ENCODE measurements at regions of chr15 and their contacts with region 1.

Region 1: GRCh38 chr15:62066663-62067447 is at the start of gene C2CD4A:
- DNase-seq: peak; percentile 82
- ATAC-seq: peak; percentile 73
- H3K4me3 Mint-ChIP-seq: peak within 1 kb of the TSS; percentile 77
- H3K27ac Mint-ChIP-seq: peak within 1 kb of the TSS; percentile 52
- H3K4me1 Mint-ChIP-seq: peaks cover 32% of the 10 kb centered on the region
- H3K27me3 Mint-ChIP-seq: peaks cover 19% of the 10 kb centered on the region
- total RNA-seq, gene C2CD4A: 0.61 to 0.73 TPM

Region 2: GRCh38 chr15:61871926-61872522 is 194.8 kb before region 1 on chr15:
- CTCF ChIA-PET with region 1: no interaction called
- POLR2A ChIA-PET with region 1: no interaction called
- intact Hi-C with region 1: loop called (anchors 2 kb)
- DNase-seq: no peak
- ATAC-seq: no peak
- H3K4me3 Mint-ChIP-seq: no peak overlapping the region
- H3K27ac Mint-ChIP-seq: no peak overlapping the region
- H3K4me1 Mint-ChIP-seq: no peaks in the 10 kb centered on the region
- H3K27me3 Mint-ChIP-seq: no peaks in the 10 kb centered on the region

Region 3: DNA sequence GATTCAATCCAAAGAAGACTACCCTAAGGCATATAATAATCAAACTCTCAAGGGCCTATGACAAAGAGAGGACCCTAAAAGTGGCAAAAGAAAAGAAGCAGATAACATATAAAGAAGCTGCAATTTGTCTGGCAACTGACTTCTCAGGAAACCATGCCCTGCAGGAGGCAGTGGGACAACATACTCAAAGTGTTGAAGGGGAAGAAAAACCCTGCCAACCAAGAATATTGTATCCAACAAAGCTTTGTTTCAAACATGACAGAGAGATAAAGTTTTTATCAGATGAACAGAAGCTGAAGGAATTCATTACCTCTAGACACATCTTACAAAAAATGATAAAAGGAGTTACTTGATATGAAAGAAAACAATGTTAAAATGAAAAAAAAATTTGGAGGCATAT is 173.7 kb before region 1 on chr15:
- CTCF ChIA-PET with region 1: no interaction called
- POLR2A ChIA-PET with region 1: no interaction called
- intact Hi-C with region 1: no loop called
- DNase-seq: no peak
- ATAC-seq: no peak
- H3K4me3 Mint-ChIP-seq: no peak overlapping the region
- H3K27ac Mint-ChIP-seq: no peak overlapping the region
- H3K4me1 Mint-ChIP-seq: no peaks in the 10 kb centered on the region
- H3K27me3 Mint-ChIP-seq: no peaks in the 10 kb centered on the region

Region 4: DNA sequence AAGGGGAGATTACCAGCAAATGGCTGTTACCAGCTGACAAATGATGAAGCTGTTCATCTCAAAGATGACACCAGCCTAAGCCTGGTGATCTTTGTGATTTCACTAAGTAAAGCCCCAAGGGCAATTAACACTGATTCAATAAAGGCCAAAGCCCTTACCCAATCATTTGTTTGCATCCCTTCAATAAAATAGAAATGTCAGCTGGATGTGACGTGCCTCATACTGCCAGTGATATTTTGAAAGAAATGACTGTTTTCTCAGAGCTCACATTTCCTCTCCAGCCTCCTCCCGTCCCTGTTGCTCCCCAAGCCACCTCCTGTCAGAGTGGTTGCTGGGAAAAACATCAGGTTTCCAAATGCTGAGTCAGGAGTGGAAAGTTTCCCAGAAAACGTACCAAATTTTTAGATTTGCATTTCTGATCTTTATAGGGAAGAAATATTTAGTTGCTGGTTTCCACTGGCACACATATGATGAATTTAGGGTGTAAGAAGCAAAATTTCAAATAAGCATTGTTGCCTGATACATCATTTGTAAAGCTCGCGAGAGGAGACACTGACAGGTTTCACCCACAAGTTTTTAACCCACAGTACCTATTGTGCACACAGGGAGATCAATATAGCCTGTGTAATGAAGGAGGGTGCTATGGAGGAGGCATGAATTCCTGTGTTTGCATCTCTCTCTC is 21.0 kb after region 1 on chr15:
- CTCF ChIA-PET with region 1: interaction called, 10 read pairs
- POLR2A ChIA-PET with region 1: no interaction called
- intact Hi-C with region 1: no loop called
- DNase-seq: no peak
- ATAC-seq: peak; percentile 47
- H3K4me3 Mint-ChIP-seq: no peak overlapping the region
- H3K27ac Mint-ChIP-seq: no peak overlapping the region
- H3K4me1 Mint-ChIP-seq: no peaks in the 10 kb centered on the region
- H3K27me3 Mint-ChIP-seq: peaks cover 2% of the 10 kb centered on the region

Region 5: DNA sequence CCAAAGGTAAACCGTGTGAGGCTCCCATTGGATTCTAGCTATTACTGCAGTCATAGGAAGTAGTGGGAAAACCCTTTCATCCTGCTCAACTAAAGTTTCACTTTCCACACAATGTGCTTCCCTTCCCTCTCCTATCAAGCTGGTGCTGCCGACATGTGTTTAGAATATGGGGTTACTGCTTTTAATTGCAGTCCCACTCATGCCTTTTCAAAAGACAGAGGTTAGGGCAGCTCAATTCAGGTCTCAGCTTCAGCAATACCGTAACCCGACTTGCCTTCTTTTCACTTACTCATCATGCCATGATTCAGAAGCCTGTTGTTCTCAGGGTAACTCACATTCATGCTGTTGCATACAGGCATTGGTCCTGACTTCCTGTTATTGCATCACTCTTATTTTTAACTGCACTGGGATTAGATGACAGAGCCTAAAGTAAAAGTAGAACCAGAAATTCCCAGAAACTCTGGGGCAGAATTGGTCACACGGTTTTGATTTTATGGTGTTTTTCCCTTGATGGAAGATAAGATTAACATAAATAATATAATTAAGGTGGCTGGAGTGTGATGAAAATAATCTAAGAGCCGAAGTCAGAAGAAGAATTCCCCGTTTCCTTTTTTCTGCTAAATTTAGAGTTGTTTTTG is 52.5 kb after region 1 on chr15:
- CTCF ChIA-PET with region 1: no interaction called
- POLR2A ChIA-PET with region 1: no interaction called
- intact Hi-C with region 1: loop called (anchors 2 to 5 kb)
- DNase-seq: peak; percentile 46
- ATAC-seq: peak; percentile 99
- H3K4me3 Mint-ChIP-seq: peak overlapping the region; percentile 17
- H3K27ac Mint-ChIP-seq: peak overlapping the region; percentile 94
- H3K4me1 Mint-ChIP-seq: peaks cover 48% of the 10 kb centered on the region
- H3K27me3 Mint-ChIP-seq: no peaks in the 10 kb centered on the region

Region 6: DNA sequence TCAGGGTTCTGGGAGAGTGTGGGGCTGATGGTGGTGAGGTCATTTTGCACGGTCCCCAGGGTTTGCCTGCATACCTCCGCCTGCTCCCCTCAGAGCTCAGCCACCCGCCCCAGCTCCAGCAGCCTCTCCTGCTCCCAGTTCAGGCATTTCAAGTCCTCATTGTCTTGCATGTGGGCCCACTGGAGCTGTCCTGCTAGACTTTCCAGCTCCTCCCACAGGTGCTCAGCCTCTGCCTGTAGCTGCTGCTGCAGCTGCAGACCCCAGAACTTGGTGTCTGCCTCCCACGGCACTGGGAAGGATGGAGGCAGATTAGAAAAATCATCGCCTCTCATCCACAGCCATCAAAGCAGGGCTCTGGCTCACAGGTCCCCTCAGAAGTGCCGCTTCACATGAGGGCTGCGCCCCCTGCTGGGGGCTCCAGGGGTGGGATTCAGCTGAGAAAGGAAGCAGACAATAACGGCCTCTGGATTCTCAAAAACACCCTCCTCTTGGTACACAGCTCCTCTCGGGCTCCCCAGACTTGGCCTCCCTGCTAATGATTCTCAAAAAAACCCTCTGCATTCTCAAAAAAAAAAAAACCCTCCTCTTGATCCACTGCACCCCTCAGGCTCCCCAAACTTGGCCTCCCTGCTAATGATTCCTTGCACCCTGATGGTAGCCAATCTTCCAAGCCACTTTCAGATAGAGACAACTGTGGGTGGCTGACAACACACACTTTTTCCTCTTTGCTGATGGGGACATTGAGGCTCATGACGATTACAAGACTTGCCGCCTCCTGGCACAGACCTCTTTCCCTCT is 187.5 kb after region 1 on chr15:
- CTCF ChIA-PET with region 1: no interaction called
- POLR2A ChIA-PET with region 1: no interaction called
- intact Hi-C with region 1: loop called in 1 of 2 experiments (anchors 5 kb)
- DNase-seq: peak; percentile 86
- ATAC-seq: peak; percentile 73
- H3K4me3 Mint-ChIP-seq: no peak overlapping the region
- H3K27ac Mint-ChIP-seq: no peak overlapping the region
- H3K4me1 Mint-ChIP-seq: no peaks in the 10 kb centered on the region
- H3K27me3 Mint-ChIP-seq: peaks cover 3% of the 10 kb centered on the region

Region 7: GRCh38 chr15:62277816-62278394 is 211.1 kb after region 1 on chr15:
- CTCF ChIA-PET with region 1: no interaction called
- POLR2A ChIA-PET with region 1: no interaction called
- intact Hi-C with region 1: no loop called
- DNase-seq: no peak
- ATAC-seq: no peak
- H3K4me3 Mint-ChIP-seq: no peak overlapping the region
- H3K27ac Mint-ChIP-seq: no peak overlapping the region
- H3K4me1 Mint-ChIP-seq: no peaks in the 10 kb centered on the region
- H3K27me3 Mint-ChIP-seq: peaks cover 24% of the 10 kb centered on the region

Region 8: GRCh38 chr15:62857411-62857853 is 790.6 kb after region 1 on chr15:
- CTCF ChIA-PET with region 1: no interaction called
- POLR2A ChIA-PET with region 1: no interaction called
- intact Hi-C with region 1: no loop called
- DNase-seq: peak; percentile 33
- ATAC-seq: peak; percentile 69
- H3K4me3 Mint-ChIP-seq: no peak overlapping the region
- H3K27ac Mint-ChIP-seq: no peak overlapping the region
- H3K4me1 Mint-ChIP-seq: peaks cover 4% of the 10 kb centered on the region
- H3K27me3 Mint-ChIP-seq: peaks cover 24% of the 10 kb centered on the region